ENCODE measurements at regions of chr14 and their contacts with region 1.

Region 1: DNA sequence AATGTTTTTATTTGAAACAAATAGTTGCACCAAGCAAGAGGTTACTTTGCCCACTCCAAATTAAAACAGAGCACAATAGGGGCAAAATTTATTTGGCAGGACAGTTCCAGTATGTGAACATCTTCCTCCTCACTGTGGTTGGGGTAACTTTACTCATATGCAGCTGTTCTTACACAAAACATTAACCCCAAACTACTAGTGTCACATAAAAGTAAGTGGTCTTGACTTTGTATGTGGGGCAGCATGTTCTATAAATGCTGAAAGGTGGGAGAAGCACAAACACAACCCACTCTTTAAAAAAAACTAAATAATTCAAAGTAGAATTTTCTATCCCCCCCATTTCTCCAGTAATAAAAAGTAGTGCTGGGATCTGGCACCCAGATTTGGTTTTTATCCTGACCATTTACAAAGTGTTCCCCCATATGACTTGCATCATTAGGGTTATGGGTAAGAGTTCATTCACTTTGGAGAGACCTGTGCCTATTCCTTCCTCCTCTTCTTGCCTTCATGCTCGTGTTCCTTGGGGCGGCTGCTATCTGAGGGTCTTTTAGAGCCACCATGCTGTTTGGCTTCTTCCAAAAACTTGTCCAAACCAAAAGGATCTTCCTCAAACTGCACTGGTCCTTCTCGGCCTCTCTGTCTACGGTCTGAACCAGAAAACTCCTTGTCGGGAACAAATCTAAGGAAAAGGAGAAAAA is 9.9 kb downstream of the SLIRP start:
- DNase-seq: no peak
- H3K4me3 ChIP-seq: no peak overlapping the region
- H3K27ac ChIP-seq: no peak overlapping the region
- H3K4me1 ChIP-seq: no peaks in the 10 kb centered on the region
- H3K27me3 ChIP-seq: no peaks in the 10 kb centered on the region
- CTCF ChIP-seq: no peak

Region 2: DNA sequence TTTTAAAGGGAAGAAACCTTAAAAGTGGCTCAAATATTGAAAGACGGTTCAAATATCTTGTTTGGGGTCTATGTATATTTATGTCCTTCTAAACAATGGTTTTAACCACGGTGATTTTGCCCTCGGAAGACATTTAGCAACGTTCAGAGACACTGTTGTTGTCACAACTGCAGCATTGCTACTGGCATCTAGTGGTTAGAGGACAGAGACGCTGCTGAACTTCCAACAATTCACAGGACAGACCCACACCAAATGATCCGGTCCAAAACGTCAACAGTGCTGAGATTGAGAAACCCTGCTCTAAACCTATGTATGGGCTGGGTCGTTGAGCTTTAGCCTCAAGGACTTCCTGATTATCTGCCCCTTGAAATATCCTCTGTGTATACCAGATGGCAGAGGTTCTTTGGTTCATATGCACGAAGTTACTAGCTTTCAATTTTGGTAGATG is 906.8 kb before region 1 on chr14:
- CTCF ChIA-PET with region 1: interaction called, 12 read pairs
- dilution Hi-C with region 1: no loop called
- in situ Hi-C with region 1: no loop called
- intact Hi-C with region 1: no loop called
- DNase-seq: peak; percentile 26
- H3K4me3 ChIP-seq: peak overlapping the region in 2 of 3 experiments; percentile 1 to 86
- H3K27ac ChIP-seq: no peak overlapping the region
- H3K4me1 ChIP-seq: peaks cover 14% of the 10 kb centered on the region
- H3K27me3 ChIP-seq: no peaks in the 10 kb centered on the region
- CTCF ChIP-seq: peak; percentile 9 to 57

Measured in mammary epithelial cell (primary cell).